WTC11 (cell line): ENCODE measurements at regions of chr1 and their contacts with region 1.

Region 1: GRCh38 chr1:109282952-109283747 is at the start of gene PSRC1:
- DNase-seq: peak; percentile 96
- ATAC-seq: peak; percentile 92
- H3K4me3 Mint-ChIP-seq: peak within 1 kb of the TSS; percentile 99
- H3K27ac Mint-ChIP-seq: peak within 1 kb of the TSS; percentile 97
- H3K4me1 Mint-ChIP-seq: peaks cover 42% of the 10 kb centered on the region
- H3K27me3 Mint-ChIP-seq: no peaks in the 10 kb centered on the region; the same call in 1 of the 2 replicates
- CTCF ChIP-seq: no peak
- total RNA-seq, gene PSRC1: 56.9 to 68.4 TPM (median 64.1 TPM) in 3 replicates

Region 2: DNA sequence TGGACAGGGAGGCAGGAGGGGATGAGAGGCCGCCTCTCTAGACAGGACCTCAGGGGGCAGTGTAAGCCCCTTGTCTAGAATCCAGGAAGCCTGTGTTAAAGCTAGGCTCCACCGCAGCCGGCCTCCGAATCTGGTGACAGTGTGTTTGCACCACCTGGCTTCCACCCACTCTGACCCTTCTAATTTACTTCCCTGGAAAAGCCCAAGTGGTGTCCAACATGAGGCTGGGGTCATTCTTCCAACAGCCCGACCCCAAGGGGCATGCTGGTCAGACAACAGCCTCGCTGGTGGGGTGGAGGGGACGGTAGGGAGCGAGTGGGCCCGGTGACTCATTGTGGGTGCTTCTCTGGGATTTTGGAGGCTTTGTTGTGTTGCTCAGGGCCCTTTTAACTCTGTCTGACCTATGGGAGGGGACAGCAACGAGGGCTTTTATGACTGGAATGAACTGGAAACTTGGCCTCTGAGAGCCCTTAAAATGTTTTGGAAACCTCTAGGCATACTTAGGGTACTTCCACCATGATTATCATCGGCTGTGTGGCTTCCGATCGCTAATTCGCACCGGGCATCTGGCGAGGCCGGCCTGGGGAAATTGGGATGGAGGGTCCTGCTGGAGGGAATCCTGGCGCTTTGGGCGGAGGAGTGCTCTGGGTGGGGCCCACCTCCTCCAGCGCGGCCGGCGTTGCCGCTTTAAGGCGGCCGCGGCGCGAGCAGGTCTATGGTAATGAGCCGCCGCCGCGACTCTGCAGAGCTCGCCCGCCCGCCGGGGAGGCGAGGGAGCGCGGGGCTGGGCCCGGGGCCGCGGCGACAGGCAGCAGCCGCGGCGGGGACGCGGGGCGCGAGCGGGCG is 34.1 kb before region 1 on chr1 and contains the start of gene CELSR2:
- CTCF ChIA-PET with region 1: interaction called, 10 read pairs
- POLR2A ChIA-PET with region 1: interaction called, 3 read pairs
- DNase-seq: peak; percentile 88
- ATAC-seq: peak; percentile 84
- H3K4me3 Mint-ChIP-seq: peak within 1 kb of the TSS; percentile 63
- H3K27ac Mint-ChIP-seq: no peak within 1 kb of the TSS
- H3K4me1 Mint-ChIP-seq: peaks cover 24% of the 10 kb centered on the region
- H3K27me3 Mint-ChIP-seq: peaks cover 36% of the 10 kb centered on the region
- CTCF ChIP-seq: no peak
- total RNA-seq, gene CELSR2: 26.8 to 31.3 TPM (median 28.2 TPM) in 3 replicates

Region 3: GRCh38 chr1:109263597-109264398 is 19.4 kb before region 1 on chr1:
- CTCF ChIA-PET with region 1: interaction called, 14 read pairs
- POLR2A ChIA-PET with region 1: no interaction called
- DNase-seq: peak; percentile 96
- ATAC-seq: peak; percentile 93
- H3K4me3 Mint-ChIP-seq: no peak overlapping the region
- H3K27ac Mint-ChIP-seq: no peak overlapping the region
- H3K4me1 Mint-ChIP-seq: peaks cover 21% of the 10 kb centered on the region
- H3K27me3 Mint-ChIP-seq: no peaks in the 10 kb centered on the region
- CTCF ChIP-seq: peak; percentile 97

Region 4: DNA sequence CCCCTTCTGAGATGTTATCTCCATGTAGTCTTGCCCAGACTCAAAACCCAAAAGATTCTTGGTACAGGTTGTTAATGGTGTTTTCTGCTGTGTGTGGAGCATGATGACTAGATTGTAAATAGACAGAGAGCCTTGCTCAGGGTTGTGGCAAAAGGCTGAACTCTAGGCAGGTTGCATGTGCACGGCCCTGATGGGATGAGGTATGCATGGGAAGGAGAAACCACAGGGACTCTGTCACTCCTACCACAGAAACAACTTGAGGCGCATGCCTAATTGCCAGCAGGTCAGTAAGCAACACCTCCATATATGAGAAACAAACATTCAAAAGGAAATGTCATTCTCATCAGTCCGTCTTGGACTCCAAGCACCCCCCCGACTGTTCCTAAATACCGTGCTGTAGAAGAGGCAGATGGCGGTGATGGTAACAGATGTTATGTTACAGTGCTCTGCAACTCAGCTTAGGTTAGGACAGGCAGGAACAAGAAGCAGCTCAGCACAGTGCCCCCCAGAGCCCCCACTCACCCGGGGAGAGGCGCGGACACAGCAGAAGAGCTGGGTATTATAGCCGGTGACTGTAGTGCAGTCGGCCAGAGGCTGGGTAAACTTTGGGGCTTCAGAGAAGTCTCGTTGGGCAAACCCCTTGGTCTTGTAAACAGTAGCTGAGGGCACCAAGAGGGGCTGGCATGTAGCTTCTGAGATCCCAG is 12.7 kb after region 1 on chr1:
- CTCF ChIA-PET with region 1: interaction called, 19 read pairs
- POLR2A ChIA-PET with region 1: interaction called, 12 read pairs
- DNase-seq: no peak
- ATAC-seq: peak; percentile 63
- H3K4me3 Mint-ChIP-seq: no peak overlapping the region
- H3K27ac Mint-ChIP-seq: no peak overlapping the region
- H3K4me1 Mint-ChIP-seq: peaks cover 15% of the 10 kb centered on the region
- H3K27me3 Mint-ChIP-seq: no peaks in the 10 kb centered on the region
- CTCF ChIP-seq: no peak

Region 5: DNA sequence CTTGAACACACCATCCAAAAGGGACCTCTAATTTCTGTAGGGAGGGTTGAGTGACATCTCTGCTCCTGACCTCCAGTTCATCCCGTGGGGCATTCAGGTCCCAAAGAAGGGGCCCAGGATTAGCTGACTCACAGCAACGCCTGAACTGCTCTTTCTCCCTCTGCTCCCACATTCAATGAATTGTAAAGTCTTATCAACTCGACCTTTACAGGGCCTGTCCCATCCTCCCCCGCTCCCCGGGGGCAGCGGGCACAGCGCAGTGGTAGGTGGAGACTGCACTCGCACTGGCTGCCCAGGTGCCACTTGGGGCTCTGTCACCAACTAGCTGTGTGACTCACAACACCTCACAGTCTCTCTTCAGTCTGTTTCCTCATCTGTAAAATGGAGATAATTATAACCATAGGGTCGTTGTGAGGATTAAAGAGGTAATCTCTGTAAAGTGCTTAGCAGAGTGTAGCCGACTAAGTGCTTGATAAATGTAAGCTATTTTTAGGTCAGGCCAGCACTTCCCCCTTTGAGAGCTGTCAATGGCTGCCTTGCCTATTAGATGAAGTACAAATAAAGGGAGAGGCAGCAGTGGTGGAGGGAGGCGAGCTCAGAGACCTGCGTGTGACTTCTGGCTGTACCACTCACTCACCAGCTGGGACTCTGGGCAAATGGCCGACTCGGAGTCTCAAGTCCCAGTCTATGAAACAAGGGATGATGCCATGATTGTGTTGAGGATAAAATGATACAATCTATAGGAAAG is 24.3 kb after region 1 on chr1:
- CTCF ChIA-PET with region 1: interaction called, 18 read pairs
- POLR2A ChIA-PET with region 1: interaction called, 9 read pairs
- DNase-seq: no peak
- ATAC-seq: no peak
- H3K4me3 Mint-ChIP-seq: no peak overlapping the region
- H3K27ac Mint-ChIP-seq: peak overlapping the region; percentile 66; the same call in 1 of the 2 replicates
- H3K4me1 Mint-ChIP-seq: peaks cover 17% of the 10 kb centered on the region
- H3K27me3 Mint-ChIP-seq: no peaks in the 10 kb centered on the region
- CTCF ChIP-seq: no peak